ENCODE measurements at regions of chr12 and their contacts with region 1.

Region 1: GRCh38 chr12:110312581-110313360 is 31.7 kb downstream of the ATP2A2 start:
- DNase-seq: no peak
- H3K4me3 Mint-ChIP-seq: no peak overlapping the region
- H3K27ac Mint-ChIP-seq: peak overlapping the region; percentile 49
- H3K4me1 Mint-ChIP-seq: peaks cover 50% of the 10 kb centered on the region
- H3K27me3 Mint-ChIP-seq: no peaks in the 10 kb centered on the region

Region 2: GRCh38 chr12:110349531-110350151 is 36.9 kb after region 1 on chr12:
- intact Hi-C with region 1: loop called (anchors 5 kb)
- DNase-seq: peak; percentile 45
- H3K4me3 Mint-ChIP-seq: peak overlapping the region; percentile 45
- H3K27ac Mint-ChIP-seq: peak overlapping the region; percentile 90
- H3K4me1 Mint-ChIP-seq: peaks cover 50% of the 10 kb centered on the region
- H3K27me3 Mint-ChIP-seq: no peaks in the 10 kb centered on the region